H1 (cell line): ENCODE measurements at regions of chr10 and their contacts with region 1.

Region 1: DNA sequence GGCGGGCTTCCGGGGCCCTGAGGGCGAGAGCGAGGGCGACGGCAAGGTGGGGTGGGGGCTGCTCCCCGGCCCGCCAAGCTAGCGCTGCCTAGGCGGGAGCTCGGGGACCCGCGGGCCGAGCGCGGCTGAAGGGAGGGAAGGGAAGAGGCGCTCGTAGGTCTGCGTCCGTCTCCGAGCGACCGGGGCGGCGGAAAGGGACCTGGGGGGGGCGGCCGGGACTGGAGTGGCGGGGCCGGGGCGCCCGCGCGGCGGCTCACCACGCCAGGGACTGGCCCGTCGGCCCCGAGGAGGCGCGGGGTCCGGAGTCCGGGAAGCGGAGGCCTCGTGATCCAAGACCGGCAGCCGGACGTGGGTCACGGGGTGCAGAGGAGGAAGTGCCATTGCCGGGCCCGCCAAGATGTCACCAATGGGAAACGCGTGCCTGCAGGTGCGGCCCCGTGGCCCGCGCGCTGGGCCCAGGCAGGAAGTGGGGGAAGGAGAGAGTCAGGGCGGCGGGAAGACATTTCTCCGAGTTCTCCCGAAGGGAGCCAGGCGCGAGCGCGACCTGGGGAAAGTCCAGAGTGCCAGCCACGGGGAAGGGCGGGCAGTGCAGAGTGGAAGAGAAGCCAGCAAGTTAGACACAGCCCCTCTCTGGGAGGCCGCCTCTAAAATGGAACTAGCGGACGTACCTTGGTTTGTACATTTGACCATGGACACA is 11.9 kb downstream of the HNRNPF start:
- DNase-seq: peak in 1 of 2 experiments; percentile 89
- H3K4me3 ChIP-seq: peak overlapping the region; percentile 57 to 91 (median 75)
- H3K27ac ChIP-seq: peak overlapping the region; percentile 90; the same call in 1 of the 2 replicates
- H3K4me1 ChIP-seq: peaks cover 5 to 16% (median 12%) of the 10 kb centered on the region in 4 experiments
- H3K27me3 ChIP-seq: no peaks in the 10 kb centered on the region
- CTCF ChIP-seq: no peak
- EP300 ChIP-seq: peak in 1 of 2 experiments; percentile 51; a peak in 1 of 3 replicates
- POLR2A ChIP-seq: peak in 1 of 2 experiments; percentile 19; a peak in 2 of 3 replicates
- RAD21 ChIP-seq: no peak

Region 2: GRCh38 chr10:43339136-43339535 is 57.9 kb before region 1 on chr10:
- CTCF ChIA-PET with region 1: no interaction called
- POLR2A ChIA-PET with region 1: no interaction called
- DNase-seq: no peak
- H3K4me3 ChIP-seq: no peak overlapping the region
- H3K27ac ChIP-seq: no peak overlapping the region
- H3K4me1 ChIP-seq: peaks cover 4 to 11% (median 7%) of the 10 kb centered on the region in 4 experiments
- H3K27me3 ChIP-seq: no peaks in the 10 kb centered on the region
- CTCF ChIP-seq: no peak
- EP300 ChIP-seq: no peak
- POLR2A ChIP-seq: no peak
- RAD21 ChIP-seq: no peak

Region 3: GRCh38 chr10:43380610-43381222 is 16.4 kb before region 1 on chr10:
- CTCF ChIA-PET with region 1: interaction called, 14 read pairs
- POLR2A ChIA-PET with region 1: interaction called, 112 read pairs
- DNase-seq: no peak
- H3K4me3 ChIP-seq: no peak overlapping the region
- H3K27ac ChIP-seq: no peak overlapping the region
- H3K4me1 ChIP-seq: peaks cover 0 to 12% (median 5%) of the 10 kb centered on the region in 4 experiments; a peak in 6 of 7 replicates
- H3K27me3 ChIP-seq: no peaks in the 10 kb centered on the region
- CTCF ChIP-seq: no peak
- EP300 ChIP-seq: no peak
- POLR2A ChIP-seq: no peak
- RAD21 ChIP-seq: no peak

Region 4: DNA sequence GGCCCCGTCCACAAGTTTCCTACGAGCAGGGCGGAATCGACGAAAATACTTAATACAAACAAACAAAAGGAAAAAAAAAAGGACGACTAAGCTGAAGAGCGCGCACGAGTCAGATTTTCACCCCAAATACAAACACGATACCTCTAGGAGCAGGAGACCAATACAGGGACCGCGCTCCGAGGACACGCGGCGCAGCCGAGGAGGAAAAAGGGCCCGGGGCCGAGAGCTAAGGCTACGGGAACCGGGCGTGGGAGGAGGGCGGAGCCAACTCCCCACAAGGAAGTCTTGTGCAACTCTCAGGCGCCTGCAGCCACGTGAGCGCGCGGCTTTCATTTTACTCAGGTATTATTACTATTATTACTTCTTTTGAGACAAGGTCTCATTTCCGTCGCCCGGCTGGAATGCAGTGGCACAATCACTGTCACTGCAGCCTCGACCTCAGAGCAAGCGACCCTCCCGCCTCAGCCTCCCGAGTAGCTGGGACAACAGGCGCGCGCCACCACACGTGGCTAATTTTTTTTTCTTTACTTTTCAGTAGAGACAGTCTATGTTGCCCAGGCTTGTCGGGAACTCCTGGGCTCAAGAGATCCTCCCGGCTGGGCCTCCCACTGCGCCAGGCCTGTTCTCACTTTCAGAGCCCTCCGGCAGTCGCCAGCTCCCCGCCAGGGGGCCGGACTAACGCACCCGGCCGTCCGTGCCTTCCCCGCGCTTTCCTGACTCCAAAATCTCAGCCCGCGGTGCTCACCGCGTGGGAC is 10.7 kb after region 1 on chr10:
- CTCF ChIA-PET with region 1: interaction called, 5 read pairs
- POLR2A ChIA-PET with region 1: interaction called, 104 read pairs
- DNase-seq: peak in 1 of 2 experiments; percentile 71
- H3K4me3 ChIP-seq: peak overlapping the region; percentile 61 to 97 (median 89)
- H3K27ac ChIP-seq: peak overlapping the region; percentile 99
- H3K4me1 ChIP-seq: peaks cover 0 to 9% (median 3%) of the 10 kb centered on the region in 4 experiments; a peak in 5 of 7 replicates
- H3K27me3 ChIP-seq: no peaks in the 10 kb centered on the region
- CTCF ChIP-seq: peak in 2 of 3 experiments; percentile 8 to 19; a peak in 2 of 4 replicates
- EP300 ChIP-seq: no peak
- POLR2A ChIP-seq: peak; percentile 23 to 91
- RAD21 ChIP-seq: no peak; a peak in 1 of 4 replicates

Region 5: DNA sequence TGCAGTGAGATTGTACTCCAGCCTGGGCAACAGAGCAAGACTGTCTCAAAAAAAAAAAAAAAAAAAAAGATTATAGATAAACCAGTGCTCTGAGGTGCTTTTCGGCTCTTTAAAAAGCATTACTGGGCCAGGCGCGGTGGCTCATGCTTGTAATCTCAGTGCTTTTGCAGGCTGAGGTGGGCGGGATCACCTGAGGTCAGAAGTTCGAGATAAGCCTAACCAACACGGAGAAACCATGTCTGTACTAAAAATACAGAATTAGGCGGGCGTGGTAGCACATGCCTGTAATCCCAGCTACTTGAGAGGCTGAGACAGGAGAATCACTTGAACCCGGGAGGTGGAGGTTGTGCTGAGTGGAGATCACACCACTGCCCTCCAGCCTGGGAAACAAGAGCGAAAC is 18.5 kb after region 1 on chr10:
- CTCF ChIA-PET with region 1: interaction called, 4 read pairs
- POLR2A ChIA-PET with region 1: interaction called, 26 read pairs
- DNase-seq: no peak
- H3K4me3 ChIP-seq: no peak overlapping the region
- H3K27ac ChIP-seq: no peak overlapping the region
- H3K4me1 ChIP-seq: peaks cover 0 to 2% (median 0%) of the 10 kb centered on the region in 4 experiments; a peak in 1 of 7 replicates
- H3K27me3 ChIP-seq: no peaks in the 10 kb centered on the region; a peak in 1 of 7 replicates
- CTCF ChIP-seq: no peak
- EP300 ChIP-seq: no peak
- POLR2A ChIP-seq: no peak
- RAD21 ChIP-seq: no peak

Region 6: DNA sequence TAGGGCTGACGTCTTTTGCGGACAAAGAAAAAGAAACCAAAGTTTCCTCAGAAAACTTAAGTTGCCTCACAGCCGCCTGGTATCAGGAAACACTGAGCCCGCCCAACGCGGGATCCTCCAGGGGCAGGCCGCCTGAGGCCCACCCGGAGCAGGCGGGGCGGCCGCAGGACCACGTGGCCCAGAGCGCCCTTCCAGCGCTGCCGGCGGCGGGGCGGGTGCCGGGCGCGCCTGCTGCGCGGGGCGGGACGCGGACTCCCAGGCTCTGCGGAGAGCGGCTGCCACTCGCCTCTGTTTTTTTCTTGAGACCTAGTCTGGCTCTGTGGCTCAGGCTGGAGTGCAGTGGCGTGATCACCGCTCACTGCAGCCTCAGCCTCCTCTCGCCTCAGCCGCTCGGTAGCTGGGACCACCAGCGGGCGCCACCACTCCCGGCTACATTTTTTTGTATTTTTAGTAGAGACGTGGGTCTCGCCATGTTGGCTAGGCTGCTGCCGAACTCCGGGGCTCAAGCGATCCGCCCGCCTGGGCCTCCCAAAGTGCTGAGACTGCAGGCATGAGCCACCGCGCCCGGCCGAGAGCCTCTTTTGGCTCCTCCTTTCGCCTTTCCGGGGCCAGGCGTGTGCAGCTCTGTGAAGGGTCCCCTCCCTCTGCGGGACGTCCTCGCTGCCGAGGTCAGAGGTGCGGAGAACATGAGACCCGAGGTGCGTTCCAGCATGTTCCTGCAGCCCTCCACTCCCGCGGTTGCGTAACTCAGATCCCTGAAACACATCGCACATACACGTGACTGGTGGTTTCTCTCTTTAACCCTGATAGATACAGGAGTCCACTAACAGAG is 23.5 kb after region 1 on chr10:
- CTCF ChIA-PET with region 1: interaction called, 4 read pairs
- POLR2A ChIA-PET with region 1: interaction called, 26 read pairs
- DNase-seq: peak in 1 of 2 experiments; percentile 73
- H3K4me3 ChIP-seq: peak overlapping the region; percentile 46 to 60 (median 47)
- H3K27ac ChIP-seq: 0 out of 2 replicates have a peak overlapping the region, but pooled peaks have one; percentile 17
- H3K4me1 ChIP-seq: peaks cover 0 to 5% (median 2%) of the 10 kb centered on the region in 4 experiments; a peak in 4 of 7 replicates
- H3K27me3 ChIP-seq: no peaks in the 10 kb centered on the region; a peak in 1 of 7 replicates
- CTCF ChIP-seq: peak in 2 of 3 experiments; percentile 13 to 35; a peak in 2 of 4 replicates
- EP300 ChIP-seq: no peak
- POLR2A ChIP-seq: peak; percentile 41 to 80
- RAD21 ChIP-seq: no peak; a peak in 1 of 4 replicates

Region 7: GRCh38 chr10:43436400-43437140 is 39.5 kb after region 1 on chr10 and contains the start of gene ZNF487:
- CTCF ChIA-PET with region 1: interaction called, 3 read pairs
- POLR2A ChIA-PET with region 1: interaction called, 21 read pairs
- DNase-seq: peak; percentile 51 to 94
- H3K4me3 ChIP-seq: peak within 1 kb of the TSS; percentile 66 to 81 (median 79)
- H3K27ac ChIP-seq: peak within 1 kb of the TSS; percentile 96
- H3K4me1 ChIP-seq: no peaks in the 10 kb centered on the region
- H3K27me3 ChIP-seq: no peaks in the 10 kb centered on the region
- CTCF ChIP-seq: peak in 2 of 3 experiments; percentile 11 to 22; a peak in 2 of 4 replicates
- EP300 ChIP-seq: no peak
- POLR2A ChIP-seq: peak; percentile 84 to 89
- RAD21 ChIP-seq: peak; percentile 17 to 42; a peak in 1 of 4 replicates
- total RNA-seq, gene ZNF487: 1.9 TPM in 2 replicates

Region 8: GRCh38 chr10:43479275-43479674 is 82.2 kb after region 1 on chr10:
- CTCF ChIA-PET with region 1: no interaction called
- POLR2A ChIA-PET with region 1: no interaction called
- DNase-seq: no peak
- H3K4me3 ChIP-seq: no peak overlapping the region
- H3K27ac ChIP-seq: no peak overlapping the region
- H3K4me1 ChIP-seq: no peaks in the 10 kb centered on the region
- H3K27me3 ChIP-seq: no peaks in the 10 kb centered on the region
- CTCF ChIP-seq: no peak
- EP300 ChIP-seq: no peak
- POLR2A ChIP-seq: no peak
- RAD21 ChIP-seq: no peak